Spleen (tissue), 13 donors: ENCODE measurements at regions of chr3 and their contacts with region 1.

Region 1: DNA sequence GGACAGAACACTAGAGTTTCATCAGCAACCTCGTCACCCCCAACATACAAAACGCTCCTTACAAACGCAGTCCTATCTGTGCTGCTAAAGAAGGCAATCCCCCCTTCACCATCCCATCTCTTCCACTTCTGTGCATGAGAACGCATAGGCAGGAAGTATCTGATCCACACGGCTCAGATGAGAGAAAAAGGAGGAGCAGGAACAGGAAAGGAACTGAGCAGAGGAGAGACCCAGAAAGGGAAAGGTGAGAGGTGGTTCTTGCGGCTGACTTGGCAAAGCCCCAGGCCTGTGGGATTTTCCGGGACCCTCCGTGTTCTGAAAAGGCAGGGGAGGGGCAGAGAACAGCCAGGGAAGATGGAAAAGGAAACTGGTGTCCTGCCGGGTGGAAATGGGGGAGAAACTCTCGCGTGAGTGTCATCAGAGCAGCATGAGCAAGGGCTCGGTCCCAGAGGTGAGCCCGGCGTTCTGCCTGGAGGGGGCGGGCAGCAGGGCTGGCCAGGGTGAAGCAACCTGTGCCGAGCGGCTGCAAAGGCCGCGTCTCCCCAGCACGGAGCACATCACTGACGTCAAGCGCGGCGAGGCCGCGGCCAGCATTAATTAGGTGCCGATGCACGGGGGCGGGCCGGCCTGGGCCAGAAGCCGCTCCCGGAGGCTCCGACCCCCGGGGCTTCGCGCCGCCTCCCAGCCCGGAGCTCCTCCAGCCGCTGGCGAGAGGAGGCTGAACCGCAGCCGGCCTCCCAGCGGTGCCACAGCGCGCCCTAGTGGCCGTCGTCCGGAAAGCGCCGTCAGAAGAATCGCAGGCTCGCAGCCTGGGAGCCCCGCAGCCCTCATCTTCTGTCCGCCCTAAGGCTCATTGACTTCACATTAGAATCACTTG is 35.8 kb downstream of the CPN2 start:
- DNase-seq: peak; percentile 96
- H3K4me3 ChIP-seq: peak overlapping the region; percentile 32 to 67 (median 42)
- H3K27ac ChIP-seq: peak overlapping the region in 4 of 8 donors; percentile 1 to 37 (median 20)
- H3K4me1 ChIP-seq: peaks cover 3 to 37% (median 19%) of the 10 kb centered on the region in 6 donors
- H3K27me3 ChIP-seq: peaks cover 0 to 76% (median 15%) of the 10 kb centered on the region in 7 donors
- CTCF ChIP-seq: peak; percentile 76 to 97 (median 93)
- POLR2A ChIP-seq: no peak

Region 2: DNA sequence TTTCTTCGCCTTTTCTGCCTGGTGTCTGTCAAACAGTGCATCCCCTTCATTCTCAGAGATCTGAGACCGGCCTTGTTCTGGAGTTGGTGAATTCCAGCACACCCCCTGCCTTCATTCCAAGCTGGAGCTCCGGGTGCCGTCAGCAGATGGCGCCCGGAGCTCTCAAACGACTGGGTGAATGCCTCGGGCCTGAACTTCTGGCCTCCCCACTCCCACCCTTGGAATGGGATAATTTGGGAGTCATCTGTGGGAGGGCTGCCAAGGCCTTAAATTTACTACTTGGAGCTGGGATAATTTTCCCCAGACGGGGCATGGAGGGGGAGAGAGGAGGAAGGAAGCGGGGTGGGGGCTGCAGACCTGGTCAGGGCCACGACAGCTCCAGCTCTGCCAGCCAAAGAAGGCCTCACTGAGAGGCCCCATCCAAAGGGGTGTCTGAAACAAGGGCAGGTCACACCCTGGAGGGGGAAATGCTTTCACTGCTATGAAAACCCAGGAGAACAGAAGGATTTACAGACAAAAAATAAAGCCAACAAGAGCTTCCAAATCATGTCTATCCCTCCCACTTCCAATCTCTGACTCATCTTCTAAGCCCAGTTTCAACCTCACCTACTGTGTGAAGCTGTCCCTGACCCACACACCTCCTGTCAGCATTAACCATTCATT is 534.4 kb before region 1 on chr3:
- intact Hi-C with region 1: loop called (anchors 5 kb)
- DNase-seq: peak; percentile 81
- H3K4me3 ChIP-seq: no peak overlapping the region
- H3K27ac ChIP-seq: peak overlapping the region in 4 of 8 donors; percentile 34 to 51 (median 37)
- H3K4me1 ChIP-seq: peaks cover 0 to 38% (median 23%) of the 10 kb centered on the region in 6 donors
- H3K27me3 ChIP-seq: peaks cover 0 to 49% (median 0%) of the 10 kb centered on the region in 7 donors
- CTCF ChIP-seq: peak in 10 of 11 experiments; percentile 29 to 79 (median 68)
- POLR2A ChIP-seq: no peak

Region 3: DNA sequence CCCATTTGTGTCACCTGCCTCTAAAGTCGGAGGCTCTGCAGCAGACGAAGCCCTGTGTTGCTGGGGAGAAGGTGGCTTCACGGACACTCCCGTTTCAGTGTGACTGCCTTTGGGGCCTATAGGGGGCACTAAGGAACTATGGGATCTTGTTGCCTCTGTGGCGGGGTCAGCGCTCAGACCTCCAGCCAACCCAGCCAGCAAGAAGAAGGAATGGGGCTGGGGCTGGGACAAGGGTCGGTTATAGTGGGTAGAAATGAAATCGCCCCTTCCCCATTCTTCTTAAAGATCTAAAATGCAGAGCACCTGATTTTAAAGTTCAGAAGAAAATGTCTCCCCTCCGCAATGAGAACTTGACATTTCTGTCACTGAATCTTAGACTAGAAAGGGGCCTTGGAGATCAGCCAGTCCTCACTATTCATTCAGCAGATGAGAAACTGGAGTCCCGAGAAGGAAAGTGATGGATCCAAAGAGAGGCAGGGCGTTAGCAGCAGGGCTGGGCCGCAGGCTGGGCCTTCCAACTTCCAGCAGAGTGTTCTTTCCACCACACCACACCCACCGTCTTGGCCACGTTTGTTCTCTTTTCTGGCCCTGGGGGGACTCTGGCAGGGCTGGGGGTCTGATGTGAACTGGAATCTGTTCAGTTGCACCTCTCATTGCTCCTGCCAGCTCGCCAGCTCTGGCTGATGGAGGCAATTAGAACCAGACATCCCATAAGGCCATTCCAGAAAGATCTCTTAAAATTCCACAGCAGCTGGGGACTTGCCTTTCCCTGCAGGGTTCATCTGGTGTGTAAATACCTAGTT is 526.9 kb before region 1 on chr3:
- intact Hi-C with region 1: loop called (anchors 5 kb)
- DNase-seq: no peak
- H3K4me3 ChIP-seq: no peak overlapping the region
- H3K27ac ChIP-seq: no peak overlapping the region
- H3K4me1 ChIP-seq: peaks cover 7 to 24% (median 9%) of the 10 kb centered on the region in 6 donors
- H3K27me3 ChIP-seq: peaks cover 0 to 17% (median 0%) of the 10 kb centered on the region in 7 donors
- CTCF ChIP-seq: peak; percentile 69 to 86 (median 80)
- POLR2A ChIP-seq: no peak

Region 4: DNA sequence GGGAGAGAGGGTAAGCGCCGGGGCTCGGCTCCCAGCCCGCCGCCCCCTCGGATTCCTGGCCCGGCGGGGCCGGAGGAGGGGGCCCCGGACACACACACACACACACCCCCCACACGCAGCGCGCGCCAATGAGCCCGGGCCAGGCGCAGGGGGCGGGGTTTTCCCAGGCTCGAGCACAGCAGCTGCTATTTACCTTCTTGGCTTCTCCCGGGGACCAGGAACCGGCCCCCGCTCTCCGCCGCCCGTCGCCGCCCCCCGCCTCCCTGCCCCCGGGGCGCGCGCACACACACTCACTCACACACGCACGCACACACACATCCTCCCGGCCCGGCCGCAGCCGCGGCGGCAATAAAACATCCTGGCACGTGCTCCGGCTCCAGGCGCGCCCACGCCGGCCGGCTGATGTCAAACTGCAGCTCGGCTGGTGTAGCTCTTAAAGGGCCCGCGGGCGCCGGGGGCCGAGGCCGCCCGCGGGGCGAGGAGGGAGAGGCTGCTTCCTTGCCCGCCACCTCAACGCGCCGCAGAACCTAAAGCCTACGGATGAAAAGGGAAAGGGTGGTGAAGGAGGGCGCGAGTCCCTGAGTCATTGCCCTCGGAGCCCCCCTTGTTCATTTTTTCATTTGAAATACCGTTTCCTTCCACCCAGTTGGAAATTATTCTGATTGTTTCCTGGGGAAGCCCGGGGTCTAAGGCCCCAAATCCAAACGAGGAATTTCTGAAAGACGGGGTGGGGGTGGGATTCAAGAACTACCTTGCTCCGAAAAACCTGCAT is 180.4 kb before region 1 on chr3:
- intact Hi-C with region 1: loop called (anchors 5 kb)
- DNase-seq: peak; percentile 96
- H3K4me3 ChIP-seq: peak overlapping the region; percentile 47 to 75 (median 66)
- H3K27ac ChIP-seq: peak overlapping the region; percentile 80 to 95 (median 92)
- H3K4me1 ChIP-seq: peaks cover 30 to 97% (median 91%) of the 10 kb centered on the region in 6 donors
- H3K27me3 ChIP-seq: peaks cover 0 to 91% (median 3%) of the 10 kb centered on the region in 7 donors
- CTCF ChIP-seq: no peak
- POLR2A ChIP-seq: peak in 1 of 3 donors; percentile 44